ENCODE measurements at regions of chr6 and their contacts with region 1.

Region 1: DNA sequence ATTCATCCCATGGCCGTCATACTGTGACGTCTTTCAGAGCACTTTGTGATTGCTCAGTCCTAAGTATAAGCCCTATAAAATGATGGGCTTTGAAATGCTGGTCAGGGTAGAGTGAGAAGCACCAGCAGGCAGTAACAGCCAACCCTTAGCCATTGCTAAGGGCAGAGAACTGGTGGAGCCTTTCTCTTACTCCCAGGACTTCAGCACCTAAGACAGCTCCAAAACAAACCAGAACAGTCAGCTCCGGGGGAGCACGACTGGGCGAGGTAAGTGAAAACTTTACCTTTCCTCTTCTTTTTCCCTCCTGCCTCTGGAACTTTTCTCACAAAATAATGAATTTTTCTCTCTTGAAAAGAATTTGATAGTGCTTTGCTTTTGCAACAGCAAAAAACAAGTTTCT is at the start of gene VIP:
- DNase-seq: peak; percentile 27
- H3K4me3 ChIP-seq: no peak within 1 kb of the TSS
- H3K27ac ChIP-seq: no peak within 1 kb of the TSS
- H3K27me3 ChIP-seq: no peaks in the 10 kb centered on the region
- CTCF ChIP-seq: no peak

Region 2: DNA sequence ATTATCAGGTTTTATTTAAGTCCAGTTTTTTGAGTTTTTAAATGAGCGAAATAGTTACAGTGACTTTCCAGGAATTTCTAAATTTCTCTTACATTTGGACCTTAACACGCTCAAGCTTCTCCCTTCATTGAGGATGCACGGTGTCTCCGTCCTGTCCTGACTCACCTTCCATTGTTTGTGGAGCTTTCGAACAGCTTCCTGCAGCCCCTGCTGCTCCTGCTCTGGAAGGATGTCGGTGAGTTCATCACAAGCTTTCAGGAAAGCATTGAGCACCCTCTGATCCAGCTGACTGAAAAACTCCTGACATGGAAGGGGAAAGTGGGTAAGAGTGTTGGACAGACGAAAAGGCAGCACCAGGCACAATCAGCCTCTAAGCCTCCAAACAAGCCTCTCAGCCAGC is 297.3 kb before region 1 on chr6:
- in situ Hi-C with region 1: no loop called
- DNase-seq: no peak
- H3K4me3 ChIP-seq: no peak overlapping the region
- H3K27ac ChIP-seq: no peak overlapping the region
- H3K27me3 ChIP-seq: no peaks in the 10 kb centered on the region
- CTCF ChIP-seq: no peak

Region 3: DNA sequence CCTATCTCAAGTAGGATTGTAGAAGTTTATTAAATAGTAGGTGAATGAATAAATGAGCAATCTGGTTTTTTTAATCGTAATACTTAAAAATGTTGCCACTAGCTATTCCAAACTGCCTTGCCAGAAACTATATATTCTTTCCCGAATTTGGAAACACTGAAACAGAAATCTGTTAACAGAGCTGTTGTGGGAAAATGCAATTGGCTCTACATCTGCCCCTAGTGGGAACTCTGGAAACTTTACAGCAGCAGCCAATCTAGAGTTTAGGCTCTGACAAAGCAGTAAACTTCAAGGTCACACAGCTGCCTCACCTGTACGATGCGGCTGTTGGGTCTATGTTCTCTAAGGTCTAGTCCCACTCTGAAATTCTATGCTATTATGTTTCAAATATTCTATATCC is 155.2 kb before region 1 on chr6:
- in situ Hi-C with region 1: no loop called
- DNase-seq: no peak
- H3K4me3 ChIP-seq: no peak overlapping the region
- H3K27ac ChIP-seq: no peak overlapping the region
- H3K27me3 ChIP-seq: no peaks in the 10 kb centered on the region
- CTCF ChIP-seq: peak; percentile 67

Region 4: GRCh38 chr6:152948150-152948768 is 197.6 kb after region 1 on chr6:
- in situ Hi-C with region 1: loop called (anchors 25 kb)
- DNase-seq: peak; percentile 25
- H3K4me3 ChIP-seq: no peak overlapping the region
- H3K27ac ChIP-seq: no peak overlapping the region
- H3K27me3 ChIP-seq: no peaks in the 10 kb centered on the region
- CTCF ChIP-seq: peak; percentile 56

Measured in brain microvascular endothelial cell (primary cell).